Thyroid gland (tissue), 4 donors: ENCODE measurements at regions of chr2 and their contacts with region 1.

Region 1: DNA sequence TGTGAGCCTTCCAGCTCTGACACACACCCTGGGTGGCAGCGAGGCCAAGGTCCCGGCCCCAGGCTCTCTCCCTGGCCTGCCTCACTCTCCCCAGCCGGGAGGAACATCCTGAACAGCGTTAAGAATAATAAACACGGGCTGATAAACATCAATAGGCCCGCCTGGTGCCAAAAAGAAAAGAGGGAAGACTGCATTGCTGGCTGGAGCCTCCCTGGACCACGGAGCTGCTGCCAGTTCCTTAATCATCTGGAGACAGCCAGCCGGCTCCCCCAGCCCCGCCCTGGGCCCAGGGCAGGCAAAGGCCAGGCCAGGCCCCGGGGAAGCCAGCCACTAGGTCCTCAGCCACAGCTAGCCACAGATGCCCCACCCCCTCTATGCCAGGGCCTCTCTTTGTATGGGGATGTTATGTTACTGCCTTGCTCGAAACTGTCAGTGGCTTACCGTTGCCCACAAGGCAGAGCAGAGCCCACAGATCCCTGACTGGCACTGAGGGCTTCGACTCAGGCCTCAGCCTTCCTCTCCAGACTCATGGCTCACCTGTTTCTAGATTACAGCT is 293.7 kb downstream of the DYSF start:
- DNase-seq: peak; percentile 25 to 38
- H3K4me3 ChIP-seq: no peak overlapping the region
- H3K27ac ChIP-seq: peak overlapping the region in 2 of 3 donors; percentile 25 to 55
- H3K4me1 ChIP-seq: peaks cover 0 to 27% of the 10 kb centered on the region in 2 donors
- H3K27me3 ChIP-seq: no peaks in the 10 kb centered on the region
- CTCF ChIP-seq: no peak
- POLR2A ChIP-seq: no peak

Region 2: GRCh38 chr2:71482055-71482454 is 265.0 kb before region 1 on chr2:
- intact Hi-C with region 1: no loop called
- DNase-seq: no peak
- H3K4me3 ChIP-seq: no peak overlapping the region
- H3K27ac ChIP-seq: no peak overlapping the region
- H3K4me1 ChIP-seq: peaks cover 7 to 8% of the 10 kb centered on the region in 2 donors
- H3K27me3 ChIP-seq: no peaks in the 10 kb centered on the region
- CTCF ChIP-seq: no peak
- POLR2A ChIP-seq: no peak

Region 3: GRCh38 chr2:71671895-71672825 is 74.9 kb before region 1 on chr2:
- intact Hi-C with region 1: loop called (anchors 2 kb)
- DNase-seq: no peak
- H3K4me3 ChIP-seq: no peak overlapping the region
- H3K27ac ChIP-seq: no peak overlapping the region
- H3K4me1 ChIP-seq: peaks cover 7 to 15% of the 10 kb centered on the region in 2 donors
- H3K27me3 ChIP-seq: no peaks in the 10 kb centered on the region
- CTCF ChIP-seq: no peak
- POLR2A ChIP-seq: no peak